ENCODE measurements at regions of chr4 and their contacts with region 1.

Region 1: DNA sequence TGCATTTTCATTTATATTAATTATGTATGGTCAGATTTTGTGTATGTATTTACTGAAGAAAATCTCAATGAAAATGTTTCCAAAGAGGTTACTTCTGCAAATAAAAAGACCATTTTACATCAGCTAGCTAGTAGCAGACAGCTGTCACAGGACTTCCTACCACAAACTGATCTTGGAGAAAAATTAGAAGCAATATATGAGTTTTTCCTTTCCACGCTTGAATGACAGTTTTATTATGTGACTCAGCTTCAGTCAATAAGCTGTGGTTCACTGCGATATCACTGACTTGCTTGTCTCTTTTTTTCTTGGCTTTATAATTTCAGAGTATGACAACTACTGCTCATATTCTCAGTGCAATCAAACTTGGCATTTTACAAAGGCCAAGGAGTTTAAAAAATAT is 787.4 kb upstream of the GALNTL6 start:
- DNase-seq: no peak
- H3K4me3 ChIP-seq: no peak overlapping the region
- H3K27ac ChIP-seq: no peak overlapping the region
- H3K4me1 ChIP-seq: no peaks in the 10 kb centered on the region
- H3K27me3 ChIP-seq: no peaks in the 10 kb centered on the region
- CTCF ChIP-seq: no peak
- POLR2A ChIP-seq: no peak

Region 2: GRCh38 chr4:169988252-169988651 is 1037.5 kb before region 1 on chr4:
- intact Hi-C with region 1: loop called in 1 of 2 experiments (anchors 10 kb)
- DNase-seq: no peak
- H3K4me3 ChIP-seq: no peak overlapping the region
- H3K27ac ChIP-seq: no peak overlapping the region
- H3K4me1 ChIP-seq: no peaks in the 10 kb centered on the region
- H3K27me3 ChIP-seq: no peaks in the 10 kb centered on the region
- CTCF ChIP-seq: no peak
- POLR2A ChIP-seq: no peak

Region 3: GRCh38 chr4:170743633-170744032 is 282.1 kb before region 1 on chr4:
- intact Hi-C with region 1: no loop called
- DNase-seq: no peak
- H3K4me3 ChIP-seq: no peak overlapping the region
- H3K27ac ChIP-seq: no peak overlapping the region
- H3K4me1 ChIP-seq: no peaks in the 10 kb centered on the region
- H3K27me3 ChIP-seq: no peaks in the 10 kb centered on the region
- CTCF ChIP-seq: no peak
- POLR2A ChIP-seq: no peak

Region 4: DNA sequence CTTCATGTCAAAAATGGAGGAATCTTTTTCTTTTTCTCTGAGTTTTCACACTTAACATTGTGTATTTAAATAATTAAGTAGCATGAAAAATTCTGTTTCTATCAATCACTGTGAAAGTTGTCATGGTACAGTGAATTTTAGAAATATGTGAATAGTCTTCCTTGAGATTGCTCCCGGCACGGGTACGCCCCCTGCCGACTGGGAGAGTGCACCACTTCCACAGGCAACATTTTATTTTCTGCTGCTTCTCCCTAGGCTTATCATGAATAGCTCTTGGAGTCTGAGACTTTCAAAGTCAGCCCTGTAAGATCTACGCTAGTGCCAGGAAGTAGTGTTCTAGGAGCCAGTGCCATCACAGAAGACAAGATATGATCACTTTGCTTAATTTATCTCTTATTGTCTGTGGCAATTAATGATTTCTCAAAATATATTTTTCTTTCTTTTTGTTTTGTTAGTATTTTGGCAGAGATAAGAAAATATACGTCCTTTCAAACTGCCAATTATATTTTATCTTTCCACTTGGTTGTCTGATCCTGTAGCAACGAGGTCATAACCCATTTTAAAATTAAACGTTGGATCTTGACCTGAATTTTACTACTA is 172.3 kb before region 1 on chr4:
- intact Hi-C with region 1: no loop called
- DNase-seq: peak; percentile 16 to 63 (median 44)
- H3K4me3 ChIP-seq: no peak overlapping the region
- H3K27ac ChIP-seq: no peak overlapping the region
- H3K4me1 ChIP-seq: no peaks in the 10 kb centered on the region
- H3K27me3 ChIP-seq: no peaks in the 10 kb centered on the region
- CTCF ChIP-seq: peak; percentile 7 to 64 (median 50)
- POLR2A ChIP-seq: no peak

Region 5: DNA sequence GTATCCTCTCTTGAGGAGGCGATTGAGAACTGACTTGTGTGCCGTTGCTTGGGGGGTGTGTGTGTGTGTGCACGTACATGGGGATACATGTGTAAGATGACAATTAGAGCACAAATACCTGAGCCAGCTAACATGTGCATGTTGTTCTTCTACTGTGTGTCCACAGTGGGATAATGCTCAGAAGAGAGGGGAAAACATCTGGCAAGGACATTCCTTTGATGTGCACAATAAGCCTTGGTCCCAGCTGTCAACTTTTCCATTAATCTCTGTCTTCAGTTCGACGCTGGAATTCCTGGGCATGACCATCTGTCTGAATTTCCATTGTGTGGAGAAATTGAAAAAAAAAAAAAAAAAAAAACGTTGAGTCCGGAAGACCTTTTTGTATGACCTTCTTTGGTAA is 195.4 kb after region 1 on chr4:
- intact Hi-C with region 1: no loop called
- DNase-seq: no peak
- H3K4me3 ChIP-seq: no peak overlapping the region
- H3K27ac ChIP-seq: no peak overlapping the region
- H3K4me1 ChIP-seq: no peaks in the 10 kb centered on the region
- H3K27me3 ChIP-seq: no peaks in the 10 kb centered on the region
- CTCF ChIP-seq: no peak
- POLR2A ChIP-seq: no peak